ENCODE measurements at regions of chr1 and their contacts with region 1.

Region 1: GRCh38 chr1:58652651-58653184 is 47.1 kb downstream of the MYSM1 start:
- DNase-seq: peak; percentile 77 to 91 (median 87)
- H3K4me3 ChIP-seq: no peak overlapping the region
- H3K27ac ChIP-seq: no peak overlapping the region
- H3K4me1 ChIP-seq: peaks cover 0 to 17% (median 6%) of the 10 kb centered on the region in 4 experiments
- H3K27me3 ChIP-seq: no peaks in the 10 kb centered on the region

Region 2: DNA sequence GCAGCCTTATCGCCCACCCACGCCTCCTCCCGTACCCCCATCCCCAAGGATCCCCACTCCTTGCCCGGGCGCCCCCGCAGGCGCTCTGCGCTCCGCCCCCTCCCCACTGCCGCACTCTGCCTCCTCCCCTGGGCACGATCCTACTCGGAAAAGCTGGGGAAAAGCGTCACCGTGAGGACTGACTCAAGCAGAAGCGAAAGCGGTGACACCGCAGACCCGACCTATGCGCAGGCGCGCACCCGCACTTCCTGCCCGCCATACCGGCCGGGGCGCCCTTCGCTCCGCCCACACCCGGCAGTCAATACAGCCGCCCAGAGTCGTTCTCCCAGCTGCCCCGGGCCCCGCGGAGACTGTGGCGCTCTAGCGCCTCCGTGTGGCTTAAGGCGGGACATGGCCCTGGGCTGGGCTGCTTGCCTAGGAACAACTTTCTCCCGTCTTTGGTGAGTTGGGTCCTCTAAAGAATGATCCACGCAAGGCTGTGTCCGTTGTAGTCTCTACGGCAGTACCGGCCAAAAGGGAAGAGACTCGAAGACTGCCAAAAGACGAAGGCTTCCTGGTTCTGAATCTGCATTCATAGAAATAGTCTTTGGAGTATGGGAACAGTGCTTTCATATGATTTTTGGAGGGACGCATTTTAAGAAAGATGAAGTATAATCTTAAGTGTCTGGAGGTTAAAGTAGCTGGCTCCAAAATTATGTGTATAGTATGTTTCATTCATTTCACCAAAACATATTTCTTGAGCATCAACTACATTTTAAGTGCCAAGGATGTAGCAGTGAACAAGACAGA is 106.0 kb before region 1 on chr1 and contains the start of gene OMA1:
- CTCF ChIA-PET with region 1: interaction called, 17 read pairs
- POLR2A ChIA-PET with region 1: no interaction called
- DNase-seq: peak; percentile 97 to 99 (median 99)
- H3K4me3 ChIP-seq: peak within 1 kb of the TSS; percentile 68 to 90 (median 81)
- H3K27ac ChIP-seq: peak within 1 kb of the TSS; percentile 85 to 94
- H3K4me1 ChIP-seq: peaks cover 3 to 19% (median 11%) of the 10 kb centered on the region in 4 experiments
- H3K27me3 ChIP-seq: no peaks in the 10 kb centered on the region

Region 3: GRCh38 chr1:58664881-58665280 is 12.2 kb after region 1 on chr1:
- CTCF ChIA-PET with region 1: interaction called, 15 read pairs
- POLR2A ChIA-PET with region 1: interaction called, 3 read pairs
- DNase-seq: no peak
- H3K4me3 ChIP-seq: no peak overlapping the region
- H3K27ac ChIP-seq: no peak overlapping the region
- H3K4me1 ChIP-seq: no peaks in the 10 kb centered on the region
- H3K27me3 ChIP-seq: no peaks in the 10 kb centered on the region